ENCODE measurements at regions of chr6 and their contacts with region 1.

Region 1: GRCh38 chr6:32153564-32154513 is at the start of gene PPT2:
- DNase-seq: peak; percentile 92
- ATAC-seq: peak; percentile 92
- total RNA-seq, gene PPT2: 22.8 TPM

Region 2: GRCh38 chr6:31007694-31008093 is 1146.1 kb before region 1 on chr6:
- intact Hi-C with region 1: no loop called
- DNase-seq: no peak
- ATAC-seq: no peak

Region 3: GRCh38 chr6:32118782-32119628 is 34.8 kb before region 1 on chr6:
- intact Hi-C with region 1: loop called (anchors 1 kb)
- DNase-seq: peak; percentile 92
- ATAC-seq: peak; percentile 73

Region 4: GRCh38 chr6:32127717-32128592 is 25.9 kb before region 1 on chr6 and contains the start of gene ATF6B:
- intact Hi-C with region 1: loop called (anchors 1 kb)
- DNase-seq: peak; percentile 98
- ATAC-seq: peak; percentile 96
- total RNA-seq, gene ATF6B: 24.4 TPM

Region 5: GRCh38 chr6:32177788-32178546 is 24.1 kb after region 1 on chr6 and contains the start of gene RNF5:
- intact Hi-C with region 1: loop called (anchors 1 kb)
- DNase-seq: peak; percentile 96
- ATAC-seq: peak; percentile 88
- total RNA-seq, gene RNF5: 97.5 TPM

Measured in Right ventricle myocardium inferior (tissue), 1 donor.